Caco-2 (cell line): ENCODE measurements at regions of chr4 and their contacts with region 1.

Region 1: DNA sequence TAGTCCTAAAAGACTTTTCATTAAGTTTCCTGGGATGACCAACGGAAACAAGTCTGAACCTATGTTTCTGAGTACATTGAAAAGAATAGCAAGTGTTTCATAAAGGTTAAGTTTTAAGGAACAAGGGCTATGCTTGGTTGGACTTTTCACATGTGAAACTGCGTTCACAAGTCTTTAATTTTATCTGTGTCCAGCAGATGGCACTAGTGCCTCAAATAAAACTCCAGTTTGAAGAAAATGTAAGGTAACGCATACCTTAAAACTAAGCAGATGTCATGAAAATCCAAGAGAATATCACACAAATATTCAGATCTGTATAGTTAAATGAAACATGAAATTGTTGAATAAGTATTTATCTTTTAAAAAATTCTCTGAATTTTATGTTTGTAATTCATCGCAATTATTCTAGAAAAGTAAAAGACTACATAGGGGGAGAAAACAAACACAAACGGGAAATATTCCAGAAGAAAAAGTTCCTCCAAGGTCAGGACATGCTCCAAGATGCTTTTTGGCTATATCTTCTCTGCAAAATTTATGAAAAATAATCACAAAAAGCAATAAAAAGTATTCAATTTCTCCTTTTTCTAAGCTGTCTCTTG is 89.6 kb upstream of the MAD2L1 start:
- DNase-seq: peak in 1 of 2 experiments; percentile 56
- H3K4me3 ChIP-seq: no peak overlapping the region
- H3K4me3 Mint-ChIP-seq: no peak overlapping the region
- H3K27ac Mint-ChIP-seq: no peak overlapping the region
- H3K4me1 ChIP-seq: no peaks in the 10 kb centered on the region
- H3K4me1 Mint-ChIP-seq: no peaks in the 10 kb centered on the region
- H3K27me3 ChIP-seq: no peaks in the 10 kb centered on the region
- H3K27me3 Mint-ChIP-seq: peaks cover 6% of the 10 kb centered on the region
- CTCF ChIP-seq: peak; percentile 28 to 57

Region 2: DNA sequence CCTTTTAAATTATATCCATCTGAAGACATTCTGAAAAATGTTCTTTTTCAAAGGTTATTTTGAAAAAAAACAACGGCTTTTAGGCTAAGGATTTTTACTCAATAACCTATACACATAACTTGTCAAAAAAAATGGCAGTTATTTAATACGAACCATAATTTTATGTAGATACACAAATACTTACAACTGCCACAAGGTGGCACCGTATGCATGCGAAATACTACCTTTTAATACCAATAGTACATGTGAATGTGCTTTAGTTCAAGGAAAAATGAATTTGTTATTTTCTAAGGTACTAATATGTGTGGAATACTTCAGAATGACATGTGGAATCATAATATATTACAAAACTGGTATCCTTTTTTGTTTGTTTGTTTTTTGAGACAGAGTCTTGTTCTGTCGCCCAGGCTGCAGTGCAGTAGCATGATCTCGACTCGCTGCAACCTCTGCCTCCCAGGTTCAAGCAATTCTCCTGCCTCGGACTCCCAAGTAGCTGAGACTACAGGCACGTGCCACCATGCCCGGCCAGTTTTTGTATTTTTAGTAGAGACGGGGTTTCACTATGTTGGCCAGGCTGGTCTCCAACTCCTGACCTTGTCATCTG is 84.9 kb before region 1 on chr4:
- CTCF ChIA-PET with region 1: no interaction called
- POLR2A ChIA-PET with region 1: no interaction called
- intact Hi-C with region 1: loop called (anchors 1 kb)
- DNase-seq: peak; percentile 37 to 42
- H3K4me3 ChIP-seq: no peak overlapping the region
- H3K4me3 Mint-ChIP-seq: no peak overlapping the region
- H3K27ac Mint-ChIP-seq: no peak overlapping the region
- H3K4me1 ChIP-seq: peaks cover 5% of the 10 kb centered on the region; the same call in 1 of the 2 replicates
- H3K4me1 Mint-ChIP-seq: no peaks in the 10 kb centered on the region
- H3K27me3 ChIP-seq: no peaks in the 10 kb centered on the region
- H3K27me3 Mint-ChIP-seq: no peaks in the 10 kb centered on the region
- CTCF ChIP-seq: peak; percentile 38 to 65

Region 3: GRCh38 chr4:120568731-120569130 is 412.5 kb after region 1 on chr4:
- CTCF ChIA-PET with region 1: no interaction called
- POLR2A ChIA-PET with region 1: no interaction called
- intact Hi-C with region 1: loop called (anchors 10 kb)
- DNase-seq: no peak
- H3K4me3 ChIP-seq: no peak overlapping the region
- H3K4me3 Mint-ChIP-seq: no peak overlapping the region
- H3K27ac Mint-ChIP-seq: no peak overlapping the region
- H3K4me1 ChIP-seq: no peaks in the 10 kb centered on the region
- H3K4me1 Mint-ChIP-seq: no peaks in the 10 kb centered on the region
- H3K27me3 ChIP-seq: no peaks in the 10 kb centered on the region
- H3K27me3 Mint-ChIP-seq: no peaks in the 10 kb centered on the region
- CTCF ChIP-seq: no peak

Region 4: DNA sequence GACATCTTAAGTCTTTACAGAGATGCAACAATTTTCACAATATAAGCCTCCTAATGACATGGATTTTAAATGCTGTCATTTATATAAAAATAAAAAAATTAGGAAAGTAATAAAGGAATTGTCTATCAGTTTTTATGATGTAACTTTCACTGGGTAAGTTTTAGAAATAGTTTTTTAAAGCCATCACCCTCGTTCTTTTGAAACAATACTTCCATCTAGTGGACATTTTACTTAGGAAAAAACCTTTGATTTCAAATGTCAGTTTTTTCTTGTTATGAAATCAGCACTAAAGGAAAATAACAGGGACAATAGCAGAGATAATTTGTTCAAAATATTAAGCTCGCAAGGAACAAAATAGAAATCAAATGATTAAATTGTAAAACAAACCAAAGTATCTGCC is 940.4 kb after region 1 on chr4:
- CTCF ChIA-PET with region 1: no interaction called
- POLR2A ChIA-PET with region 1: no interaction called
- intact Hi-C with region 1: loop called (anchors 1 kb)
- DNase-seq: no peak
- H3K4me3 ChIP-seq: no peak overlapping the region
- H3K4me3 Mint-ChIP-seq: no peak overlapping the region
- H3K27ac Mint-ChIP-seq: no peak overlapping the region
- H3K4me1 ChIP-seq: no peaks in the 10 kb centered on the region
- H3K4me1 Mint-ChIP-seq: no peaks in the 10 kb centered on the region
- H3K27me3 ChIP-seq: no peaks in the 10 kb centered on the region
- H3K27me3 Mint-ChIP-seq: no peaks in the 10 kb centered on the region
- CTCF ChIP-seq: peak; percentile 36 to 39

Region 5: DNA sequence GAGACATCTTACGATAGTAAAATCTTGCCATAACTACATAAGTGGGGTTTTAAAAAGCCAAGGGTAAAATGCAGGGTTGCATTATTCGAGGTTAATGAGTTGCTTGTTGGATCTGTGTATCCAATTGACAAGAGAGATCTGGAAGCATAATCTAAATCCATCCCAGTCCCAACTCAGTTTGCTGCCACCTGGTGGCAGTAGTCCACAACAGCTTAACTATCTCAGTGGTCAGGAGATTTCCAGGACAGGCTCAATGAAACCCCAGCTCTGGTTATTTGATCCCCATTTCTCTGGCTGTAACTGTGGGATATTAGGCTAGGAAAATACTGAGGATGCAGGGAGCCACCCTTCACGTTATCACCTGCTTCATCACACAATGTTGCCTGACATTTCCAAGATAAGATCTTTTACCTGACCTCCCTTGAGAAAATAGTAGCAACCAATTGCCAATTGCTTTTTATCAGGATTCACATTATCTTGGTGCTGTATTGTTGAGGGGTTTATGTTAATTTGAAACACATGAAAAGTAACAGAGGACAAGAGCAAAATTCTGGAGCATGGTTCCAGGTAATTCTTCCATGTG is 1096.1 kb after region 1 on chr4:
- CTCF ChIA-PET with region 1: no interaction called
- POLR2A ChIA-PET with region 1: no interaction called
- intact Hi-C with region 1: loop called (anchors 1 kb)
- DNase-seq: peak; percentile 69
- H3K4me3 ChIP-seq: no peak overlapping the region
- H3K4me3 Mint-ChIP-seq: no peak overlapping the region
- H3K27ac Mint-ChIP-seq: no peak overlapping the region
- H3K4me1 ChIP-seq: peaks cover 4% of the 10 kb centered on the region; the same call in 1 of the 2 replicates
- H3K4me1 Mint-ChIP-seq: no peaks in the 10 kb centered on the region
- H3K27me3 ChIP-seq: no peaks in the 10 kb centered on the region
- H3K27me3 Mint-ChIP-seq: no peaks in the 10 kb centered on the region
- CTCF ChIP-seq: peak; percentile 63 to 74